ENCODE measurements at regions of chr2 and their contacts with region 1.

Region 1: DNA sequence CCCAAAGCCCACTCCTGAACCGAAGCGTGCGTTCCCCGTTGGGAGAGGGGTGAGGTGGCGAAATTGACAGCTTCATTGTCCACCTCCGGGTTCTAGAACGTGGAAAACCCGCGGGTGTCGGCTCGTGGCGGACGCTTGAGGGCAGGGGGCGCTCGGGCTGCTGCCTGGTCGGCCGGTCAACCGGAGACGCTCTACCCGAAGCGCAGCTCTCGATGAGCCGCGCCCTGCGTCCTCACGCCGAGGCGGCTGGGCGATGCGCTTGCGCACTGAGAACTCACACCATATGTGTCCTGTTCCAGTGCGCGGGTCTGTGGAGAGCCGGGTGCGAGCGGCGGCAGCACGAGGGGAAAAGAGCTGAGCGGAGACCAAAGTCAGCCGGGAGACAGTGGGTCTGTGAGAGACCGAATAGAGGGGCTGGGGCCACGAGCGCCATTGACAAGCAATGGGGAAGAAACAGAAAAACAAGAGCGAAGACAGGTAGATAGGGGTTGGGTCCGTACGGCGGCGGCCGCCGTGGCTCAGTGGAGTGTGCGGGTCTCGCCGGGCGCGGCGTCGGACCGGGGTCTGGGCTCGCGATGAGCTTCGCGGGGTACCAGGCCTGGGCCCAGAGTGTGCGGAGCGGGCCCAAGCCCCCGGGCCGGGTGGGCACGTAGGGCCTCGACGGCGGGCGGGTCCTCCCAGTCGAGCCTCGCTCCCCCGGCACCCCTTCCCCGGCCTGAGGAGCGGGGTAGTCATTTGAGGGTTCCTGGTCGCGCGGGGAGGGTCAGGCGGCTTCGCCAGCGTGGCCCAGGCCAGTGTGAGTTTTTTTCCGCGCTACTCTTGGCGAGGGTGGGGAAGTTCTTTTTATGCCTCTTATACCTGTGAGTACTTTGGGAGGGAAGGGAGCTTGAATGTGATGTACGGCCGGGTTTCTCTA is at the start of gene EIF5B:
- DNase-seq: peak; percentile 93
- H3K4me3 Mint-ChIP-seq: no peak within 1 kb of the TSS
- H3K27ac Mint-ChIP-seq: no peak within 1 kb of the TSS
- H3K4me1 Mint-ChIP-seq: peaks cover 47% of the 10 kb centered on the region
- H3K27me3 Mint-ChIP-seq: no peaks in the 10 kb centered on the region
- total RNA-seq, gene EIF5B: 84.7 and 84.8 TPM in 2 replicates

Region 2: GRCh38 chr2:98465456-98466226 is 871.7 kb before region 1 on chr2:
- intact Hi-C with region 1: no loop called
- DNase-seq: peak; percentile 70
- H3K4me3 Mint-ChIP-seq: peak overlapping the region; percentile 84
- H3K27ac Mint-ChIP-seq: peak overlapping the region; percentile 99
- H3K4me1 Mint-ChIP-seq: peaks cover 83% of the 10 kb centered on the region
- H3K27me3 Mint-ChIP-seq: no peaks in the 10 kb centered on the region

Region 3: DNA sequence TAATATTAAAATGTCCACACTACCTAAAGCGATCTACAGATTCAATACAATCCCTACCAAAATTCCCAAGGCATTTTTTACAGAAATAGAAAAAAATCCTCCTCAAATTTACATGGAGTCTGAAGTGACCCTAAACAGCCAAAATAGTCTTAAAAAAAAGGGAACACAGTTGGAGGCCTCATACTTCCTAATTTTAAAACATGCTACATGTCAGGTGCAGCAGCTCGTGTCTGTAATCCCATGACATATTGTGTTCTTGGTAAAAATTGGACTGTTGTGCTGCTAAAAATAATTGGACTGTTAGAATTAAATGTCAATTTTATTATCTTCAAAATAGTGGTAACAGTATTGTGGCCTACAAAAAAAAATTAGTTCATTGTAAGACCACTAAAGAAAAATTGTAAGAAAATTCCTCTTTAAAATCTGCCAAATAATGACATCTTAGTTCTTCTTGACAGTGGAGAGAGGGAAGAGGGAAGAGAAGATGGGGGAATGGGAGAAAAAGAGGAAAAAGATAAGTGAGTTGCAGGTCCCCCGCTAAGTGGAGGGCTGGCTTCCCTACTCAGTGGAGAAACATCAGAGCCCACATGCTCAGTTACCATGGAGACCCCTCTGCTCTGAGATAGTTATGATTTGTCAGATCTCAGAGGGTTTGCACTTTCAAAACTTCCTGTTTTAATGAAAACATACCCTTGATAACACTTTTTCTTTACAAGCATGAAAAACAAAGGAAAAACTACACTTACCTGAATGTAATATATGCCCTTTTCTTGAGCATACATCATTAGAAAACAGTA is 682.5 kb before region 1 on chr2:
- intact Hi-C with region 1: loop called (anchors 5 kb)
- DNase-seq: no peak
- H3K4me3 Mint-ChIP-seq: peak overlapping the region; percentile 65
- H3K27ac Mint-ChIP-seq: peak overlapping the region; percentile 84
- H3K4me1 Mint-ChIP-seq: peaks cover 91% of the 10 kb centered on the region
- H3K27me3 Mint-ChIP-seq: no peaks in the 10 kb centered on the region

Region 4: GRCh38 chr2:99085421-99085820 is 251.9 kb before region 1 on chr2:
- intact Hi-C with region 1: loop called (anchors 10 kb)
- DNase-seq: no peak
- H3K4me3 Mint-ChIP-seq: no peak overlapping the region
- H3K27ac Mint-ChIP-seq: no peak overlapping the region
- H3K4me1 Mint-ChIP-seq: no peaks in the 10 kb centered on the region
- H3K27me3 Mint-ChIP-seq: peaks cover 19% of the 10 kb centered on the region

Region 5: GRCh38 chr2:99154643-99155536 is 182.5 kb before region 1 on chr2 and contains the starts of genes LIPT1 and TSGA10:
- intact Hi-C with region 1: loop called (anchors 1 kb)
- DNase-seq: peak; percentile 92
- H3K4me3 Mint-ChIP-seq: no peak within 1 kb of the TSS
- H3K27ac Mint-ChIP-seq: peak within 1 kb of the TSS; percentile 95
- H3K4me1 Mint-ChIP-seq: peaks cover 31% of the 10 kb centered on the region
- H3K27me3 Mint-ChIP-seq: no peaks in the 10 kb centered on the region
- total RNA-seq, gene LIPT1: 2.2 and 3.3 TPM in 2 replicates
- total RNA-seq, gene TSGA10: 3.0 and 4.1 TPM in 2 replicates

Region 6: DNA sequence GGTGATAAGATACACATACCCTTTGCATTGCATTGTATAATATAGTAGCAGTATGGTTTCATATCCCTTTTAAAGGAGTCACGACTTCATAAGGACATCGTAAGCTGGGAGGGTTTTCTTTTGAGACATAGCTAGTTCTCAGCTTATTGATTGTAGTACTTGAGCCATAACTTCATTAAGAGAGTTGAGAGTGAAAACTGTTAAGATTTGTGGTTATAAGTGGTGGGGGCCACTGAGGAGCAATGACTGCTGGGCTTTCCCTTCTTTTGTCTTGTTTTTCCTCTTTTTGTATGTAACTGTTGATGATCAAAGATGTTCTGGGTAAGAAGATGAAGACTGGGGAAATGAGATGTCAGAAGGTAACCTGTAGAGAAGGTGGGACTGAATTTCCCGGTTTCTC is 10.8 kb after region 1 on chr2:
- intact Hi-C with region 1: loop called (anchors 1 kb)
- DNase-seq: no peak
- H3K4me3 Mint-ChIP-seq: no peak overlapping the region
- H3K27ac Mint-ChIP-seq: peak overlapping the region; percentile 65
- H3K4me1 Mint-ChIP-seq: peaks cover 36% of the 10 kb centered on the region
- H3K27me3 Mint-ChIP-seq: no peaks in the 10 kb centered on the region

Region 7: GRCh38 chr2:100562732-100563720 is 1225.7 kb after region 1 on chr2 and contains the start of gene PDCL3:
- intact Hi-C with region 1: loop called (anchors 1 kb)
- DNase-seq: peak; percentile 93
- H3K4me3 Mint-ChIP-seq: peak within 1 kb of the TSS; percentile 97
- H3K27ac Mint-ChIP-seq: peak within 1 kb of the TSS; percentile 99
- H3K4me1 Mint-ChIP-seq: peaks cover 52% of the 10 kb centered on the region
- H3K27me3 Mint-ChIP-seq: no peaks in the 10 kb centered on the region
- total RNA-seq, gene PDCL3: 39.2 and 45.5 TPM in 2 replicates